ENCODE measurements at regions of chr1 and their contacts with region 1.

Region 1: DNA sequence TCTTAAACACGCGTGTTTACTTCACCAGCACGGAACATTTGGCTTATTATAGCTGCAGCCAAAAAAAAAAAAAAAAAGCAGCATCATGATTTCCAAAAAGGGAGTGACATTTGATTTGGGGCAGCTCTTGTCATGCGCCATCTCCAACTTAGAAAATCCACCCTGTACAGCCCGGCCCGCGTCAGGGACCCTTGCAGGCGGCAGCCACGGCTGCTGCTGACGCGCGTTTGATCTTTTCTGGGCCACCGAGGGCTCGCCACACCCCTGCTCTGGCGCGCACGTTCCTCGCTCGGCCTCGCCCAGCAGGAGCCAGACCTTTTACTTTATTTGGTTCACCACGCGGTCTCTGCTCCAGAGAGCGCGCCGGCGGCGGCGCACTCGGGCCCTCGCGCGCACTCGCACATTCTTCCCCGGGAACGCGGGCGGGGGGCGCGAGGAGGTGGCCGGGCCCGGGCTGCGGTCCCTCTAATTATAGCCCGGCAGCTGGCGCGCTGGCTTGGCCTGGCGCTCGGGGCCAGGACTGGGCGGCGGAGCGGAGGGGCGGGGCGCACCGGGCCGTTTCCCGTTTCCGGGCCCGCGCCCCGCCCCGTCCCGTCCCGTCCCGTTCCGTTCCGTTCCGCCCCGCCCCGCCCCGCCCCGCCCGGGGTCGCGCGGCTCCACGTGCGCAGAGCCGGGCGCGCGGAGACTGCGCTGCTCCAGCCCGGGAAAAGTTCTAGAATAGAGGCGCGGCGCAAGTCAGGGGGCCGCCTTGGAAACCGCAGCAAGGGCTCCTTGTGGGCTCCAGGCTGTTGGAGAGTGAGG is 10.2 kb downstream of the IRF2BP2 start:
- DNase-seq: peak; percentile 73 to 86
- H3K4me3 ChIP-seq: peak overlapping the region; percentile 32
- H3K4me1 ChIP-seq: peaks cover 52% of the 10 kb centered on the region
- H3K27me3 ChIP-seq: no peaks in the 10 kb centered on the region

Region 2: GRCh38 chr1:234413990-234414389 is 185.8 kb before region 1 on chr1:
- in situ Hi-C with region 1: no loop called
- DNase-seq: no peak
- H3K4me3 ChIP-seq: no peak overlapping the region
- H3K4me1 ChIP-seq: no peaks in the 10 kb centered on the region
- H3K27me3 ChIP-seq: no peaks in the 10 kb centered on the region

Region 3: DNA sequence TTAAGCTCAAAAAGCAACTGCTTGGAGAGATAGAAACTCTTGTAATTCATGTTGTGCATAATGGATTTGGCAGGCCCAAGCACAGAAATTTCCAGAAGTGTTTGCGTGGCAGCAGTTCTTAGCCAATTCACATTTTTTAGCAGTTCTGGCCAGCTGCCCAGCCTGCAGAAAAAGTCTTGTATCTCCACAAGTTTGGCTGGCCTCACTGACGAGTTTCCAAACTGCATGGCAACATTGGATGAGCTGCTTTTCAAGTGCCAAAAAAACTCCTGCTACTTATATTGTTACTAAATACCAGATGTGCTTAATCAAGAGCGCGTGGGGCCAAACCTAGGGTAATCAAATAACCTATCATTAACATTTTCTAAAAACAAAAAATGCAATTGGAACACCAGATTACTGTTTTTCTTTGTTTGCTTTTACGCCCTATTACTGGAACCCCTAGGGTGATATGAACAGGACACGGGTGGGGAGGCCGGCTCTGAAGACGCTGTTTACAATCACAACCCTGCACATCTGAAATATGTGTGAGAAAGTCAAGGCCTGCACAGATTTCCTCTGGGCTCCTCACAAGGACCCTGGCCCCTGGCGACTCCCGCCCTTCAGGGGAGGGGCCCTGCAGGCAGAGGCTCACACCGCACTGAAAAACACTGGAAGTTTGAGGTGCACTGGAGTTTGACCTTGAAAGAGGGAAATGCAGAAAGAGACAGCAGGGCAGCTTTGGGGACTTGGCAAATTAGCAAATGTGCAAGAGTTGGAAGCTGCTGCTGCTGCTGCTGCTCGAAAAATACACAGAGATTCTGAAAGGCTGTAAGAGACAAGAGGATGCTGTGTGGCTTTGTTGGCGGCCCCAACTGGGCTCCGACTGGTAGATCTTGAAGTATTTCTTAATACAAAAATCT is 65.6 kb before region 1 on chr1:
- in situ Hi-C with region 1: no loop called
- DNase-seq: no peak
- H3K4me3 ChIP-seq: no peak overlapping the region
- H3K4me1 ChIP-seq: 0 out of 2 replicates have a peak, but pooled peaks cover 4% of the 10 kb centered on the region
- H3K27me3 ChIP-seq: no peaks in the 10 kb centered on the region

Region 4: GRCh38 chr1:234722904-234723720 is 123.3 kb after region 1 on chr1:
- in situ Hi-C with region 1: loop called (anchors 10 kb)
- DNase-seq: no peak
- H3K4me3 ChIP-seq: no peak overlapping the region
- H3K4me1 ChIP-seq: peaks cover 22% of the 10 kb centered on the region
- H3K27me3 ChIP-seq: no peaks in the 10 kb centered on the region

Measured in HAP-1 (cell line).